Calu3 (cell line): ENCODE measurements at regions of chr15 and their contacts with region 1.

Region 1: DNA sequence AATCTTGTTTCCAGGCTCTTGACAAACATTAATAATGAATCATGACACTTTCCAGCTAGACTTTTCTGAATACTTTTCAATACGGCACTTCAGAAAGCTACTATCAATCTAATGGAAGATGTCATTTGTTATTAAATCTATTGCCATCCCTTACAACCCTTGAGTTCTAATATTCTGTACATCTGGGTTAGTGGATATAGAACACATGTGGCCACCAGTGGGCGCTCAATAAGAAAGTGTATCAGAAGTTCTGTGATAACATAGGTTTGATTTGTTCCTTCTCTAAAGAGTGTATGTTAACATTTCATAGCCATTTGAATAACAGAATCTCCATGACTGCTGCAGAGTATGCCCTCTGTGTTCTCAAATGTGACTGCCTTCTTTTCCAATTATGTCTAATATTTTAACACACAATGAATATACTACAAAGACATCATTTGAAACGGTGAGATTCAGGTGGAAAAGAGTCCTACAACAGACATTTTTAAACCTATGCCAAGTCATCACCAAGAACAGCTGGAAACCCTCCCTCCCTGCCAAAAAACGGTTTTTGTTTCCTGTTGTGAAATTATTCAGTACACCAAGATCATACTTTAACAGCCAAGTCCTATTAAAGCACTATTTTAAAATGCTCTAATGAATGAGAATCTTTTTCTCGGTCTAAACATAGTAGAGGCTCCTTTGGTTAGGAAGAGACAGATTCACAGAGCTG is 22.2 kb downstream of the ALDH1A2 start:
- DNase-seq: peak; percentile 65
- H3K4me3 Mint-ChIP-seq: no peak overlapping the region
- H3K27ac Mint-ChIP-seq: no peak overlapping the region
- H3K4me1 Mint-ChIP-seq: peaks cover 91% of the 10 kb centered on the region
- H3K27me3 Mint-ChIP-seq: no peaks in the 10 kb centered on the region
- CTCF ChIP-seq: peak; percentile 72

Region 2: DNA sequence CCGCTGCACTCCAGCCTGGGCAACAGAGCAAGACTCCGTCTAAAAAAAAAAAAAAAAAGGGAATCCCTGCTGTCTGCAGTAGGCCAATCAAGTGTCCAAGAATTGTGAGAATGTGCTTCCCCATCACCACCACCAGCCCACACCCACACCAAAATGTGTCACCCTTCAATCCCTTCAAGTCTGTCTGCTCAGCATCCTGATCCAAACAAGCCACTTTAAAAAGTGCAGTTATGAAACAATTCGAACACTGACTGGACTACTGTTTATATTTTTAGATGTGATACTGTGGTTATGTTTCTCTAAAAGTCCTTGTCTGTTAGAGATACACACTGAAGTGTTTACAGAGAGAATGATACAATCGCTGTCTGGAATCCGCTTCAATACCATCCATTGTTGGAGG is 745.1 kb before region 1 on chr15:
- CTCF ChIA-PET with region 1: no interaction called
- intact Hi-C with region 1: no loop called
- DNase-seq: no peak
- H3K4me3 Mint-ChIP-seq: no peak overlapping the region
- H3K27ac Mint-ChIP-seq: no peak overlapping the region
- H3K4me1 Mint-ChIP-seq: peaks cover 15% of the 10 kb centered on the region
- H3K27me3 Mint-ChIP-seq: no peaks in the 10 kb centered on the region
- CTCF ChIP-seq: no peak

Region 3: DNA sequence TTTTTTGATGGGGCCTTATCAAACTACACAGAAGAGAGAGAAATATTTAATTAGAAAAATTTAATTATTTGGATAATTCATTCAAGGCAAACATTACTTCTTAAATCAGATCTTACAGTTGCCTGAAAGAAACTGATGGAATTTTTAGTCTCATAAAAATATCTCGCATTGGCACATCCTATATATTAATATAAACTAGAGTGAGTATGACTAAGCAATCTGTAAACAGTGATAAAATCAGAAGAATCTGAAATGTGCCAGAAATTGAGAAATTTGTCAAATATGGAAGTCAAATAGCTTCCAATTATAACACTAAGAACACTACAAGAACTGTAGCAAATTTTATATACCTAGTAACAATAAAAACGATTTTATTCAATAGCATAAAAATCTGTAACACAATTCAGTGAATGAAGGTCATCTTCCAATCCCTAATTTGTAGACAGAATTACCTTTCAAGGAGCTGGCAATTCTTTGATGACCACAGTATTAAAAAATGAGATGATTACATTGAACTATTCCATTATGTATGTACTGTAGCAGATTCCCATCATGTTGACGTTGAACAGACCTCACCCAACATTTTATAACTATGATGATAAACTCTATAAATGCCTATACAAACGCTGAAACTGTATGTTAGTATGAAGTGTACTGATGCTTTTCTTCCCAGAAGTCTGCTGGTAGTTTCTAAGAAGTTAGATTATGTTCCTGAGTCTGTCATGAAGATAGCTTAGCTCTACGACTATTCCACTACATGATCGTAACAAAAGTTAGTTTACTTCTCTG is 40.8 kb before region 1 on chr15:
- CTCF ChIA-PET with region 1: no interaction called
- intact Hi-C with region 1: loop called (anchors 5 kb)
- DNase-seq: no peak
- H3K4me3 Mint-ChIP-seq: no peak overlapping the region
- H3K27ac Mint-ChIP-seq: no peak overlapping the region
- H3K4me1 Mint-ChIP-seq: no peaks in the 10 kb centered on the region
- H3K27me3 Mint-ChIP-seq: no peaks in the 10 kb centered on the region
- CTCF ChIP-seq: no peak

Region 4: GRCh38 chr15:58010983-58011382 is 32.4 kb before region 1 on chr15:
- CTCF ChIA-PET with region 1: no interaction called
- intact Hi-C with region 1: loop called (anchors 2 kb)
- DNase-seq: no peak
- H3K4me3 Mint-ChIP-seq: no peak overlapping the region
- H3K27ac Mint-ChIP-seq: no peak overlapping the region
- H3K4me1 Mint-ChIP-seq: no peaks in the 10 kb centered on the region
- H3K27me3 Mint-ChIP-seq: no peaks in the 10 kb centered on the region
- CTCF ChIP-seq: no peak

Region 5: GRCh38 chr15:58065445-58066041 is 22.2 kb after region 1 on chr15 and contains the start of gene ALDH1A2:
- CTCF ChIA-PET with region 1: interaction called, 10 read pairs
- intact Hi-C with region 1: loop called (anchors 2 kb)
- DNase-seq: peak; percentile 91
- H3K4me3 Mint-ChIP-seq: peak within 1 kb of the TSS; percentile 93
- H3K27ac Mint-ChIP-seq: peak within 1 kb of the TSS; percentile 81
- H3K4me1 Mint-ChIP-seq: peaks cover 32% of the 10 kb centered on the region
- H3K27me3 Mint-ChIP-seq: no peaks in the 10 kb centered on the region
- CTCF ChIP-seq: no peak
- total RNA-seq, gene ALDH1A2: 219 and 231 TPM in 2 replicates

Region 6: DNA sequence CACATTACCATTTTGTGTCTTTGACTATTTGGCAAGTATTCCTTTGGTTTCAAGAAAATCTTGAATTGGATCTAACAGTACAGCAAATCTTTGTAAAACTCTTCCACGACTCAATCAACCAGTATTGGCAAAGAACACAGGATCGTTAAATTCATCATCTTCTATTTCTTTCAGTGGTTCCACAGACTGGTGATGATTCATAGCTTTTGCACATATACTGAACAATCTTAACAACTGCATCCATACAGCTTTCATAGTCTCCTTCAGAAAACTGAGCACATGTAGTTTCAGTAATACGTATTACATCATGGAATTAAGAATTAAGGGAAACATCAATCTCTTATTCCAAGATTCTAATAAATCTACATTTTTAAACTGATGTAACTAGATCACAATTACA is 296.8 kb after region 1 on chr15:
- CTCF ChIA-PET with region 1: no interaction called
- intact Hi-C with region 1: no loop called
- DNase-seq: no peak
- H3K4me3 Mint-ChIP-seq: no peak overlapping the region
- H3K27ac Mint-ChIP-seq: no peak overlapping the region
- H3K4me1 Mint-ChIP-seq: no peaks in the 10 kb centered on the region
- H3K27me3 Mint-ChIP-seq: no peaks in the 10 kb centered on the region
- CTCF ChIP-seq: no peak

Region 7: DNA sequence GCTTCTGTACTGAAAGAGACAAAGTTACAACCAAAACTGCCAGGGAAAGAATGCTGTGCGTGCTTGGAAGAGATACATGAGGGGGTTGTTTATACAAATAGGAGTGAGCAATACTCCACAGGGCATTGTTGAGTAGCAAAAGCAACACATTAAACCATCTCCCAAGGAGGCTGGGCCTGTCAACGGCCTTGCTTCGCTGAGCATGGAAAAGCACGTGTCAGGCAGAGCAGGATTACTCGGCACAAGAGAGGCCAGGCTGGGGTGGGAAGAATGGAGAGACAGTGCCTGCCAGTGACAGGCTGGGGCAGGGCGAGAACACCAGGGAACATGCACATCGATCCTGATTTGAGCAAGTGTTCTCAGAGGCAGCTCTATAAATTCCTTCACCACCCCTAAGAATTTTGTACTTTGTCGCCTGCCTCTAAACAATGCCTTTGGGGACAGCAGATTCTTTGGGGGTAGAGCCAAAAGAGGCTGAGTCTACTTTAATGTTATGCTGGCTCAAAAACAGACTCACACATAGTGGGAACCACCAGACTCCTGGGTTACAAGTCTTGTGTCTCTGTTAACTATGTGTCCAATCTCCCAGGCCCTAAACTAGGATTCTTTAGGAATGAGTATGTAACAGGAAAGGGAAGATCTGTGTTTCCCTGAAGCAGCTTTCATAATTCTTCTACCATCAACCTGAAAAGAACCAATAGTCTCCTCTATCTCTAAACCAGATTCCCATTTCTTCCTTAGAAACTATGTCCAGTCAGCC is 455.7 kb after region 1 on chr15:
- CTCF ChIA-PET with region 1: no interaction called
- intact Hi-C with region 1: no loop called
- DNase-seq: no peak
- H3K4me3 Mint-ChIP-seq: no peak overlapping the region
- H3K27ac Mint-ChIP-seq: no peak overlapping the region
- H3K4me1 Mint-ChIP-seq: peaks cover 5% of the 10 kb centered on the region
- H3K27me3 Mint-ChIP-seq: no peaks in the 10 kb centered on the region
- CTCF ChIP-seq: no peak